T-cell (primary cell): ENCODE measurements at regions of chr10 and their contacts with region 1.

Region 1: DNA sequence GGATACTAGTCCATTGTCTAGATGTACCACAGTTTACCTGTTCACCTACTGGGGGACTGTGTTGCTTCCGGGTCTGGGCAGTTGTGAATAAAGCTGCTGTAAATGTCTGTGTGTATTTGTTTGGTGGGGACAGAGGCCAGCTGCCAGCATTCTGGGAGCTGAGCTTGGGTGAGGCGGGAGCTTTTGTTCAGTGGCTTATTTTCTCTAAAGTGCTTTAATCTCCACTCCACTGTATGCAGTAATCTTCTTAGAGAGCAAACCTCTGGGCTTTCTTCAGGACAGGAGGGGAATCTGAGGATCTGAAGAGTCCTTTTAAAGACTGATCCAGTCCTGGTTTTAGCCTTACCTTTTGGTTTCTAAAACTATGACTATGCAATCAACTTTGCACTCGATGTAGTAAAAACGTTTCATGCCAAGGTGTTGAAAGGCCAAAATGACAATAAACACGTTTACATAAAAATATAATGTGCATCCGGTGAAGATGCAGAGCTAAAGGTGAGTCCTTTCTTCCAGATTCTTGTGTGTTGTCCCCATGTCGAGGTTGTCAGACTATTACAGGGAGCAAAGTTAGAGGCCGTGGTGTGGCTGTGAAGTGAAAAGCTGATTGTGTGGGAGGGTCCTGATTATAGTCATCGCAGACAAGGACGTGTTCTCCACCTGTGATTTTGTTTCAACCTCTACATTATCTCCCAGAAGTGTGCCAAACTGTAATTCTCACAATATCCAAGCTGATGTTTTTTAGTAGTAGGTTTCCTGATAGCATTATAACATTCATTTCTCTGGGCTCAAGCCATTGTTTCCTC is 279.8 kb downstream of the CAMK1D start:
- DNase-seq: no peak
- ATAC-seq: no peak
- H3K4me3 ChIP-seq: no peak overlapping the region
- H3K4me3 Mint-ChIP-seq: no peak overlapping the region
- H3K27ac ChIP-seq: no peak overlapping the region
- H3K27ac Mint-ChIP-seq: no peak overlapping the region
- H3K4me1 ChIP-seq: peaks cover 0 to 3% of the 10 kb centered on the region in 2 experiments
- H3K4me1 Mint-ChIP-seq: peaks cover 13 to 25% (median 18%) of the 10 kb centered on the region in 3 donors
- H3K27me3 ChIP-seq: no peaks in the 10 kb centered on the region
- H3K27me3 Mint-ChIP-seq: no peaks in the 10 kb centered on the region

Region 2: DNA sequence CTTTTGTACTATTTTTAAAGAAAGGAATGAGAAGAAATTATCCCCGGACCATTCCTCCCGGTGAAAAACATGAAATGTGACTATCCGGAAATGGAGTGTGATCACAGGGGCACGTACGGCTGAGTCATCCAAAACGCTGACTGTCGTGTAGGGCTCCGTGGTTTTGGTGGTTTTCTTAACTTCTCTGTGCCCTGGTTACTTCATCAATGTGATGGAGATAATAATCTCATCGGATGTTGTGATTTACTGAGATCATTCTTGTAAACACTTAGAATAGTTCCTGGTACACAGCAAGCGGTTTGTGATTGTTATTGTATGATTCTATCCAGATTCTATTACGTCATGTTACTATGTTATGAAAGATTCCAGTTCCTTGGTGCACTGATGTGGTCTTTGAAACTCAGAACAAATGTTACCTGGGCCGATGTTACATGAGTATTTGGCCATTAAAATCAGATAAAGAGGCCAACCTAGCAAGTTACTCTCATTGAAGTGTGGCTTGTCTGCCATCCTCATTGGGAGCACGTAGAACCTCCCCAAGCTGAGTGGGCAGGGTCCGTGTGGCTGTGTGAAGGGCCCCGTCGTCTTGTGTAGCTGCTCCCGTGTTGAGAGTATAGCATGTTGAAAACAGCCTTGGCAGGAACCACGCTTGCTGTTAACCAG is 180.3 kb before region 1 on chr10:
- CTCF ChIA-PET with region 1: interaction called in 1 of 2 experiments, 4 read pairs
- POLR2A ChIA-PET with region 1: interaction called in 1 of 2 experiments, 11 read pairs
- DNase-seq: peak; percentile 18 to 94 (median 75)
- ATAC-seq: peak; percentile 93 to 94 (median 93)
- H3K4me3 ChIP-seq: peak overlapping the region in 1 of 2 donors; percentile 19
- H3K4me3 Mint-ChIP-seq: peak overlapping the region; percentile 45 to 61 (median 55)
- H3K27ac ChIP-seq: peak overlapping the region; percentile 74
- H3K27ac Mint-ChIP-seq: peak overlapping the region; percentile 87 to 96
- H3K4me1 ChIP-seq: peaks cover 3 to 22% of the 10 kb centered on the region in 2 experiments
- H3K4me1 Mint-ChIP-seq: peaks cover 33 to 59% (median 51%) of the 10 kb centered on the region in 3 donors
- H3K27me3 ChIP-seq: peaks cover 0 to 4% of the 10 kb centered on the region in 2 experiments
- H3K27me3 Mint-ChIP-seq: no peaks in the 10 kb centered on the region

Region 3: DNA sequence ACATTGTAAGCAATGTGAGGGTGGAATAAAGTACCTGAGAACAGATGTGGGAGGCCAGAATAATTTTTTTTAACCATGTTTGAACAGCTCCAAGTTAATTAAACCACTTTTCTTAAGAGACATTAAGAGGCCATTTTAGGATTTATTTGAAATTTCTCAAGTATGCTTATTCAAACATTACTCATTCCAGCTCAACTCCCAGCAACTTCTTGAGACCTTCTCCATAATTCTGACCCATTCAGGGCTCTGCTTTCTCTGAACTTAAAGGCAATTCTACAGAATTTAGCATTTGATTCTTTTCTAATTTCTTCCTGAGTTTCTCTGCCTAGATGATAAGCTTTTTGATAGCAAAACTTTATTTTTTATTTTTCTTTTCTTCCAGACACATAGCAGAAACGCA is 34.7 kb after region 1 on chr10:
- CTCF ChIA-PET with region 1: no interaction called
- POLR2A ChIA-PET with region 1: no interaction called
- DNase-seq: no peak
- ATAC-seq: no peak
- H3K4me3 ChIP-seq: no peak overlapping the region
- H3K4me3 Mint-ChIP-seq: no peak overlapping the region
- H3K27ac ChIP-seq: no peak overlapping the region
- H3K27ac Mint-ChIP-seq: no peak overlapping the region
- H3K4me1 ChIP-seq: no peaks in the 10 kb centered on the region
- H3K4me1 Mint-ChIP-seq: peaks cover 0 to 7% (median 0%) of the 10 kb centered on the region in 3 donors
- H3K27me3 ChIP-seq: no peaks in the 10 kb centered on the region
- H3K27me3 Mint-ChIP-seq: no peaks in the 10 kb centered on the region

Region 4: DNA sequence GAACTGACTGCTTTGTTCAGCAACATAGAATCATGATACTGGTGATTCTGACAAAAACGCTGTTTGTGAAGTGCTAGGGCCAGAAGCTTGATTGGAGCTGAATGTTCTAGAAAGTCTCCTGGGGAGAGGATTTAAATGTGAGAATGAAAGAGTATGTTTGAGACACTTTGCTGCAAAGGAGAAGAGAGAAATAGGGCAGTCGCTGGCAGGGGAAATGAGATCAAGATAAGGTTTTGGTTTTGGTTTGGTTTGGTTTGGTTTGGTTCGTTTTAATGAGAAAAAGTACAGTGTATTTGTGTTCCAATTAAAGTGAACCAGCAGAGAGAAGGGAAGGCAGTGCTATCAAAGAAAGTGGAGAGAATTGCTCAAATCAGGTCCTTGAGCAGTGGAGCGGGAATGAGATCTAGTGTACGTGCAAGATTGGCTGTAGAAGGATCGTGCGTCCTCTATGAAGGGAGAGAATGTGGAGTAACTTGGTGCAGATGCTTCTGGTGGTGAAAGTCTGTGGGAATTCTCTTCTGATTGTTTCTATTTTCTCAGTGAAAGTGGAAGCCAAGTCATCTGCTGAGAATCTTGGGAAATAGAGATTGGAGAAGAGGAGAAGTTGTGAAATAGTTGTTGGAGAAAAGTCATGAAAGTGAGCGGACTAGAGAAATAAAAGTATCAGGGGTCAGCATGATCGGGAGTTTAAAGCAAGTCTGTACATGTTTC is 101.8 kb after region 1 on chr10:
- CTCF ChIA-PET with region 1: no interaction called
- POLR2A ChIA-PET with region 1: interaction called in 1 of 2 experiments, 13 read pairs
- DNase-seq: no peak
- ATAC-seq: no peak
- H3K4me3 ChIP-seq: no peak overlapping the region
- H3K4me3 Mint-ChIP-seq: no peak overlapping the region
- H3K27ac ChIP-seq: no peak overlapping the region
- H3K27ac Mint-ChIP-seq: no peak overlapping the region
- H3K4me1 ChIP-seq: peaks cover 0 to 16% of the 10 kb centered on the region in 2 experiments
- H3K4me1 Mint-ChIP-seq: peaks cover 6 to 10% (median 10%) of the 10 kb centered on the region in 3 donors
- H3K27me3 ChIP-seq: no peaks in the 10 kb centered on the region
- H3K27me3 Mint-ChIP-seq: no peaks in the 10 kb centered on the region